Tibial artery (tissue), 4 donors: ENCODE measurements at regions of chr19 and their contacts with region 1.

Region 1: DNA sequence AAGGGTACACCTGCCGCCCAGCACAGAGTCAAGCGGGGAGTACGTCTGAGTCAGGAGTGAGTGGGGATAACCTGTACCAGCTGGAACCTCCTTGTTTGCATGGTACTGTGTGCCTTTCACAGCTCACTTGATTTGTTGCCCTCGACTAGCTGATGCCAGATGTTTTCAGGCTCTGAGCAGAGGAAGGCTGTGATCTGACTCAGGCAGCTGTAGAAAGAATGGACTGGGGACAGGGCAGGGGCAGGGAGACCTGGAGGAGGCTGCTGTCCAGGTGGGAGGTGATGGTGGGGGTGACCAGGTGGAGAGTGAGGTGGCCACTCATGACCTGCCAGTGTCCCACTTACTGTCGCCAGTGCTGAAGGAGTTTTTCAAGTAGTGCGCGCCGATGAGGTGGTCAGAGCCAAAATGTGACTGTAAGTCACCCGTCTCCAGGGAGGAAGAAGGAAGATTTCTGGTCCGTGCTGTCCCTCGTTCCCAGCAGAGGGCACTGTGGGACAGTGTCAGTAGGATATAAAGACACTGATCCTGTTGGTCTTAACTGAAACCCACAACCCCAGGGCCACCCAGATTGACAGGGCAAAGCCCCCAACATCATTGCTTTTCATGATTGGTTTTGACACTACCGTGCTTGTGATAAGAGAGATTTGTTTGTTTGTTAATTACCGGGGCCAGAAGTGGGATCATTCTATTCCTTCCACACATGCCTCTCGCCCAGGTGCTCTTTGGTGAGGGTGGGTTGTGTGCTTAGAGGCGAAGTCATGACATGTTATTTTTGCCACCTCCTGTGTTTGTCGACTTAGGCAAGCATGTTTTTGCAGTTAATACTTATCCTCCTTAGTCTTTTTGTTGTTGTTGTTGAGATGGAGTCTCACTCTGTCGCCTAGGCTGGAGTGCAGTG is 128.4 kb downstream of the DPF1 start:
- DNase-seq: peak; percentile 70 to 80
- H3K4me3 ChIP-seq: no peak overlapping the region
- H3K27ac ChIP-seq: no peak overlapping the region
- H3K4me1 ChIP-seq: peaks cover 0 to 5% (median 0%) of the 10 kb centered on the region in 4 donors
- H3K27me3 ChIP-seq: no peaks in the 10 kb centered on the region
- CTCF ChIP-seq: peak; percentile 55 to 62

Region 2: DNA sequence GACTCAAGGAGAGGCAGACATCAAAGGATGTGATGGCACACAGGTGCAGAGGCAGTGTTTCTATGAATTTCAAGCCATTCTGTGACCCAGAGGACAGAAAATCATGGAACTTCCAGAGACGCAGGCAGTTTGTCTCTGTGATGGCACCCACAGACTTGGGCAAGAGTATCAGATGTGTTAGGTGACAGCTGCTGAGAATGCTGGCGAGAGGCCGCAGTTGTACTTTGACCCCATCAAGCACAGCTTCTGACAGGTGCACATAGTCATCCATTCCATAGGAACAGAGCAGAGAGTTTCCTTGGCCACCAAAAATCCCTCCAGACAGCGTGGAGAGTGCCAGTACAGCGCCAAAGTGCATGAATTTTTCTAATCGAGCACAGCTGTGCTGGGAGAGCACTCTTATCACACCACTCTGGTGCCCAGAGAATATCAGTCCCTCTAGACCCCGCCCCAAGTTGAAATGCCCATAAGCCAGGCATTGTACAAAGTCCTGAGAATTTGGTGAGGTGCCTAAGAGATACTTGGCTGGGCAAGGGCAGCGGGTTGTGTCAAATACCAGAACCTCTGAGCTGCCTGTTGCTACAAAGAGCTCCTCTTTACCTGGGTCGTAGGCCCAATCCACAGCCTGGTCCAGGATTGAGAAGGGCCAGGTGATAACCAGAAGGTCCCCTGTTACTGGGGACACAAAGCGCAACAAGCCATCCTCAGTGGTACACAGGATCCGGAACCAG is 201.7 kb before region 1 on chr19:
- intact Hi-C with region 1: loop called (anchors 10 kb)
- DNase-seq: no peak
- H3K4me3 ChIP-seq: no peak overlapping the region
- H3K27ac ChIP-seq: no peak overlapping the region
- H3K4me1 ChIP-seq: no peaks in the 10 kb centered on the region
- H3K27me3 ChIP-seq: peaks cover 0 to 18% of the 10 kb centered on the region in 2 donors
- CTCF ChIP-seq: no peak

Region 3: GRCh38 chr19:37979547-37980082 is 116.0 kb before region 1 on chr19:
- intact Hi-C with region 1: no loop called
- DNase-seq: peak in 1 of 2 donors; percentile 60
- H3K4me3 ChIP-seq: no peak overlapping the region
- H3K27ac ChIP-seq: no peak overlapping the region
- H3K4me1 ChIP-seq: peaks cover 0 to 9% (median 2%) of the 10 kb centered on the region in 4 donors
- H3K27me3 ChIP-seq: no peaks in the 10 kb centered on the region
- CTCF ChIP-seq: no peak